Panc1 (cell line): ENCODE measurements at regions of chr1 and their contacts with region 1.

Region 1: DNA sequence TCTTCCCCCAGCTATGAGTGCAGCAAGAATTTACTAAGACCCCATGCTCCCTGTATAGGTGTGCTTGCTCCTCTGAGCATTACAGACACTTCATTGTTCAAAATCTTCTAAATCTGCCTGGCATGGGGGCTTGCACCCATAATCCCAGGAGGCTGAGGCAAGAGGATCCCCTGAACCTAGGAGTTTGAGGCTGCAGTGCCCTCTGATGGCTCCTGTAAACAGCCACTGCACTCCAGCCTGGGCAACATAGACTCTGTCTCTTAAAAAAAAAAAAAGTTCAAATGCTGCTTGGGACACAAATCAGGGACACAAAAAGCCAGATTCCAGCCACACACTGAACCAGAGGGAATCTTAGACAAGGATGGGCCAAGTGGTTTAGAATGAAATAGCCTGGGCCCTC is 3.4 kb upstream of the ACOT7 start:
- DNase-seq: no peak
- ATAC-seq: no peak
- H3K4me3 ChIP-seq: no peak overlapping the region
- H3K27ac ChIP-seq: no peak overlapping the region
- H3K4me1 ChIP-seq: peaks cover 5% of the 10 kb centered on the region
- H3K27me3 ChIP-seq: no peaks in the 10 kb centered on the region
- CTCF ChIP-seq: no peak; the same call in 1 of the 2 replicates

Region 2: GRCh38 chr1:5273280-5274003 is 1123.6 kb before region 1 on chr1:
- CTCF ChIA-PET with region 1: no interaction called
- POLR2A ChIA-PET with region 1: no interaction called
- in situ Hi-C with region 1: no loop called
- intact Hi-C with region 1: no loop called
- DNase-seq: no peak
- ATAC-seq: no peak
- H3K4me3 ChIP-seq: no peak overlapping the region
- H3K27ac ChIP-seq: no peak overlapping the region
- H3K4me1 ChIP-seq: no peaks in the 10 kb centered on the region
- H3K27me3 ChIP-seq: no peaks in the 10 kb centered on the region; the same call in 1 of the 2 replicates
- CTCF ChIP-seq: no peak

Region 3: DNA sequence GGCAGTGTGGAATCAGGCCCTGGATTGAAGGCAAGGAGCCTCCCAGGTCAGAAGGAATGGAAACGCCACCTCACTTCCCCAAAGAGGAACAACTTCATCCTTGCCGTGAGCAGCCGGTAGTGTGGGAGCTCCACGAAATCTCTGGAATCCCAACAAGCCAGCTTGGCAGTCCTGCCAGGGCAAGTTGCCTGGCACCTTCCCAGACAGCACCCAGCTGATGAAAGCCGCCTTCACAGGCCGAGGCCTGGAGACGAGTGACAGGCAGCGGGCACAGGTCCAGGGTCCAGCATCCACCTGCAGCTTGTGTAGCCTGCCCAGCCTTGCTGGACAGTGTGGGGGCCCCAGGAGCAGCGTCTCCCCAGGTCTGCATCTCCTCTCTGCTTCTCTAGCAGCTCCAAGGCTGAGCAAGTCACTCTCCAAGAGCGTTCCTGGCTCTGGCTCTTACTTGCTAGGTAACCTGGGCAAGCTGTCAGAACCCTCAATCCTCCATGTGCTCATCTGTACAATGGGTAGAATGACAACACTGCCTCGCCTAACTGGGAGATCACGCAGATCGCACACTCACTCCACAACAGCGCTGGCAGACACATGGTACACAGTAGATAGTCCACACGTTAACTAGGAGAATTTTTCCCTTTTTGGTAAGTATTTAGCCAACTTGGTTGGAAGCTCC is 46.4 kb before region 1 on chr1:
- CTCF ChIA-PET with region 1: no interaction called
- POLR2A ChIA-PET with region 1: no interaction called
- in situ Hi-C with region 1: no loop called
- intact Hi-C with region 1: no loop called
- DNase-seq: no peak
- ATAC-seq: no peak
- H3K4me3 ChIP-seq: no peak overlapping the region
- H3K27ac ChIP-seq: 0 out of 2 replicates have a peak overlapping the region, but pooled peaks have one; percentile 30
- H3K4me1 ChIP-seq: peaks cover 50% of the 10 kb centered on the region
- H3K27me3 ChIP-seq: no peaks in the 10 kb centered on the region
- CTCF ChIP-seq: no peak

Region 4: GRCh38 chr1:6544831-6545230 is 147.8 kb after region 1 on chr1:
- CTCF ChIA-PET with region 1: no interaction called
- POLR2A ChIA-PET with region 1: interaction called, 18 read pairs
- in situ Hi-C with region 1: no loop called
- intact Hi-C with region 1: no loop called
- DNase-seq: no peak
- ATAC-seq: no peak
- H3K4me3 ChIP-seq: no peak overlapping the region
- H3K27ac ChIP-seq: no peak overlapping the region
- H3K4me1 ChIP-seq: no peaks in the 10 kb centered on the region
- H3K27me3 ChIP-seq: no peaks in the 10 kb centered on the region
- CTCF ChIP-seq: no peak